Panc1 (cell line): ENCODE measurements at regions of chr3 and their contacts with region 1.

Region 1: GRCh38 chr3:156681002-156681401 is 6.6 kb downstream of the TIPARP start:
- DNase-seq: no peak
- ATAC-seq: peak; percentile 54; the same call in 1 of the 2 replicates
- H3K4me3 ChIP-seq: no peak overlapping the region
- H3K27ac ChIP-seq: 0 out of 2 replicates have a peak overlapping the region, but pooled peaks have one; percentile 30
- H3K4me1 ChIP-seq: peaks cover 60% of the 10 kb centered on the region
- H3K27me3 ChIP-seq: no peaks in the 10 kb centered on the region
- CTCF ChIP-seq: no peak

Region 2: DNA sequence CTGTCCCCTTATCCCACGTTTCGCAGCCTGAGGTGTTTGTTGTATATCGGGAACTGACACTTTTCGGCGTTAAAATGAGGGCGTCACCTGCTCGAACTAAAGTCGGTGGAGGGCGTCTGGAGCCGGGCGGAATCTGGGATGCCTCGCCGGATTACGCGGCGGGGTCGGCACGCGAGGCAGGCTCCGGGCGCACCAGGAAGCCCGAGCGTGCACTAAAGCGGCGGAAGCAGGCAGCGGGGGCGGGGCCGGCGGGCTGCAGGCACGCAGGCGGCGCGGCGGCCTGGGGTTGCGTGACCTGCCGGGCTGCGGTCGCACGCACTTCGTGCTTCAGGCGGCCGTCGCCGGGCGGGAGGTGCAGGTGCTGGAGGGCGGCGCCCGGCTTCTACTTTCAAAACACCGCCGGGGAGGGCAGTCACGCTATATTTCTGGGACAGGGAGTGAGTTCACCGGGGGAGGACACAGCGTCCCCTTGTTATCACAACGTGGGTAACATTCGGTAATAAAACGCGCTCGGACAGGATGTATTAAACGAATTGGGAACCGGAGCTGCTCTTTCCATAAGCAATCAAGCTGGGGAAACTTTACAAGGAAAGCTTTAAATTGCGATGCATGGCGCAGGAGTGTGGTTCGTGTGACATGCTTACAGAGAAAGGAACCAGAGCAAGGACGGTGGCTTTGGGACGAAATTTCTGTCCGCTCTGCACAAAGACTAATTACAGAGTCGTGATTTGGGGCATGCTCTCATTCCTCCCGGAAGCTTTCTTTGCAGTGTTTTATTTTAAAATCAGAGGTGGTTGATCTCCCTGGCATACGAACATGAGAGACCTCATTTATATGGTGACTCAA is 136.0 kb after region 1 on chr3:
- CTCF ChIA-PET with region 1: no interaction called
- POLR2A ChIA-PET with region 1: interaction called, 6 read pairs
- in situ Hi-C with region 1: no loop called
- intact Hi-C with region 1: loop called (anchors 2 kb)
- DNase-seq: peak; percentile 83
- ATAC-seq: peak; percentile 88
- H3K4me3 ChIP-seq: peak overlapping the region; percentile 60 to 86
- H3K27ac ChIP-seq: peak overlapping the region; percentile 97
- H3K4me1 ChIP-seq: peaks cover 51% of the 10 kb centered on the region
- H3K27me3 ChIP-seq: no peaks in the 10 kb centered on the region
- CTCF ChIP-seq: peak; percentile 40

Region 3: GRCh38 chr3:156837115-156837514 is 156.1 kb after region 1 on chr3:
- CTCF ChIA-PET with region 1: interaction called, 12 read pairs
- POLR2A ChIA-PET with region 1: no interaction called
- in situ Hi-C with region 1: no loop called
- intact Hi-C with region 1: no loop called
- DNase-seq: no peak
- ATAC-seq: no peak
- H3K4me3 ChIP-seq: no peak overlapping the region
- H3K27ac ChIP-seq: no peak overlapping the region
- H3K4me1 ChIP-seq: no peaks in the 10 kb centered on the region
- H3K27me3 ChIP-seq: no peaks in the 10 kb centered on the region
- CTCF ChIP-seq: no peak